WTC11 (cell line): ENCODE measurements at regions of chr12 and their contacts with region 1.

Region 1: DNA sequence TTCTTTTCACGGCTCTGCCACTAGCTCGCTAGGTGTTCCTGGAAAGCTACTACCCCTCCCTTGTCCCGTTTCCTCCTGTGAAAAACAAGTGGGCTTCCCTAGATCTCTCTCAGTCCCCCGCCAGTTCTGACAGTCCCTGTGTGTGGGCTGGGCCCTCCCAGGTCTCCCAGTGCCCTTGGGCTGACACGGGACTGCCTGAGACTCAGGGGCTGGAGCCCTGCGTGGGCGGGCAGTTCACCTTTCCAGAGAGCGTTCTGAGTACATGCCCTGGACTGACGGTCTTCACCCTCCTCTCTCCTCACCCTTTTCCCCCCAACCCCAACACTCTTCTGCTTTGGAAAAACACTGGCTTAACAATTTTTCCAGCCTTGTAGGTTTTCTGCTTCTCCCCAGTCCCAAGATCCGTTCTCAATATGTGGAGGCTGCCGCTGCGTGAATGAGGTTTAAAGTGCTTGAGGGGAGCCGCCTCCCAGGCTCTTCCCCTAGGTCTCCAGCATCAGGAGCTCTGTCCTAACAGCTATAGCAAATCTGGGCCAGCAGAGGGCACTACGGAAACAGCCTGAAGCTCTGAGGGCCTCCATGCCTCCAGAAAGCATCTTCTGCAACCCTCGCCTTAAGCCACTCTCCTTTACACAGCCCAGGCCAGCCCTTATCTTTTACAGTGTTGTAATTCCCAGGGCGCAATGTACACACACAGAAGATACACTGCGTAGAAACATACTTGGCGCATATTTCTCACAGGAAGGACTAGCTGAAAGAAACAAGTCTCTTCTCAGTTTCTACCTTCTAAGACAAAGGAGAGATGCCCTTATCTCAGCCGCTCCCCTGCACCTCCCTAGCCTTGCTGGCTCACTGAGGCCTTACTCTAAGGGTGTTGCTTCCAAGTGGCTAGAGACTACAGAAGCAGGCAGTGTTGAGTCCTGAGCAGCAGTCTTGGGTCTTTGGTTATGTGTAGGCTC is 10.4 kb upstream of the DCD start:
- DNase-seq: peak; percentile 87
- ATAC-seq: peak; percentile 94
- H3K4me3 Mint-ChIP-seq: peak overlapping the region; percentile 56
- H3K27ac Mint-ChIP-seq: peak overlapping the region; percentile 60; the same call in 1 of the 2 replicates
- H3K4me1 Mint-ChIP-seq: peaks cover 16% of the 10 kb centered on the region
- H3K27me3 Mint-ChIP-seq: peaks cover 15% of the 10 kb centered on the region
- CTCF ChIP-seq: peak; percentile 71

Region 2: GRCh38 chr12:54571193-54572188 is 87.1 kb before region 1 on chr12:
- CTCF ChIA-PET with region 1: interaction called, 30 read pairs
- POLR2A ChIA-PET with region 1: no interaction called
- DNase-seq: peak; percentile 54
- ATAC-seq: peak; percentile 54
- H3K4me3 Mint-ChIP-seq: no peak overlapping the region
- H3K27ac Mint-ChIP-seq: no peak overlapping the region
- H3K4me1 Mint-ChIP-seq: peaks cover 28% of the 10 kb centered on the region
- H3K27me3 Mint-ChIP-seq: peaks cover 67% of the 10 kb centered on the region
- CTCF ChIP-seq: no peak

Region 3: GRCh38 chr12:54603173-54603814 is 55.3 kb before region 1 on chr12:
- CTCF ChIA-PET with region 1: interaction called, 11 read pairs
- POLR2A ChIA-PET with region 1: no interaction called
- DNase-seq: peak; percentile 75
- ATAC-seq: peak; percentile 90
- H3K4me3 Mint-ChIP-seq: no peak overlapping the region
- H3K27ac Mint-ChIP-seq: no peak overlapping the region
- H3K4me1 Mint-ChIP-seq: no peaks in the 10 kb centered on the region; the same call in 1 of the 2 replicates
- H3K27me3 Mint-ChIP-seq: peaks cover 45% of the 10 kb centered on the region
- CTCF ChIP-seq: peak; percentile 54; the same call in 1 of the 2 replicates

Region 4: DNA sequence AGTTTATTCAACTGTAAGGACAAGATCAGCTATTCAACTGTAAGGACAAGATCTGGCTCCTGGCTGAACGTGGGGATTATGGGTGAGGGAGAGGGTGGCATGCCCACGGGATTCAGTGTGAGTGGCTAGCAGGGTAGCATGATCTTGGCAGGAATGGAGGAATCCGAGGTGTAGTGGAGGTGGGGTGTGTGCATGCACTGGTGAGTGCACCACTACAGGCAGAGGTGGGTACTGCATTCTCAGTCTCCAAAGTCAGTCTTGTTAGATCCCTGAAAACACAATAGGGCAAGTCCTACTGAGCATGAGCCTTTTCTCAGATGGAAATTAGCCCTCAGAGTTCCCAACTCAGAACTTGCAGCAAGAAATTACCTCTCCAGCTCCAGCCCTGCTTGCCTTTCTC is 21.8 kb after region 1 on chr12:
- CTCF ChIA-PET with region 1: interaction called, 33 read pairs
- POLR2A ChIA-PET with region 1: no interaction called
- DNase-seq: peak; percentile 85
- ATAC-seq: peak; percentile 72
- H3K4me3 Mint-ChIP-seq: no peak overlapping the region
- H3K27ac Mint-ChIP-seq: no peak overlapping the region; the same call in 1 of the 2 replicates
- H3K4me1 Mint-ChIP-seq: peaks cover 88% of the 10 kb centered on the region
- H3K27me3 Mint-ChIP-seq: peaks cover 12% of the 10 kb centered on the region
- CTCF ChIP-seq: peak; percentile 86

Region 5: GRCh38 chr12:54723379-54724256 is 65.0 kb after region 1 on chr12:
- CTCF ChIA-PET with region 1: interaction called, 14 read pairs
- POLR2A ChIA-PET with region 1: no interaction called
- DNase-seq: no peak
- ATAC-seq: peak; percentile 51
- H3K4me3 Mint-ChIP-seq: no peak overlapping the region
- H3K27ac Mint-ChIP-seq: no peak overlapping the region
- H3K4me1 Mint-ChIP-seq: peaks cover 41% of the 10 kb centered on the region
- H3K27me3 Mint-ChIP-seq: no peaks in the 10 kb centered on the region
- CTCF ChIP-seq: peak; percentile 53